ENCODE measurements at regions of chr10 and their contacts with region 1.

Region 1: DNA sequence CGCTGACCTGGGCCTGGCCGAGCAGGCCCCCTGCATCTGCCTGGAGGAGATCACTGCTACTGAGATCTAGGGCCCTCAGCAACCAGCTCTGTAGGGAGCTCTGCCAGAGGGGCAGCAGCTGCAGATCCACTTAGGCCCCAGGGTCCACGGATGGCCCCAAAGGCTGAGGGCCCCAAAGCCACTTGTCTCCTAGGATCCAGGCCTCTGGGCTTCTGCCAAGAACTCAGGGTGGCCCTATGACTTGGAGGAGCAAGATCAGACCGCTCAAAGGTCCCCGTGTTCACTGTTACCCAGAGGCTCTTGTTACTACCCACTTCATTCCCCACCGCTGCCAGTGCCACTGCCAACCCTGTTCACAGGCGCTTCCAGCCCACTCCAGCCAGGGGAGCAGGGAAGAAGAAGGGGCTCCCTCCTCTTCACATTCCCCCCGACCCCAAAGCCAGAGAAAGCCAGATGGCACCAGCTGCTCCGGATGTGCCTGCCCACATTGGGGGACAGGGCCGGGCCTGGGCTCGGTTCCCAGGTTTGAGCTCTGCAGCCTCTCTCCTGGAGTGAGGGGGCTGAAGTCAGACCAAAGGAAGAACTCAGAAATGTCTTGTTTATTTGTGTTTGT is 7.6 kb downstream of the LZTS2 start:
- DNase-seq: no peak
- H3K4me3 ChIP-seq: no peak overlapping the region
- H3K27ac ChIP-seq: peak overlapping the region in 1 of 2 experiments; percentile 61; a peak in 2 of 4 replicates
- H3K4me1 ChIP-seq: peaks cover 6 to 26% of the 10 kb centered on the region in 2 experiments; a peak in 3 of 4 replicates
- H3K27me3 ChIP-seq: no peaks in the 10 kb centered on the region
- CTCF ChIP-seq: no peak
- EP300 ChIP-seq: no peak
- RAD21 ChIP-seq: no peak

Region 2: GRCh38 chr10:100993986-100994708 is 13.1 kb before region 1 on chr10:
- CTCF ChIA-PET with region 1: interaction called, 132 read pairs
- POLR2A ChIA-PET with region 1: interaction called, 5 read pairs
- DNase-seq: peak; percentile 70
- H3K4me3 ChIP-seq: no peak overlapping the region
- H3K27ac ChIP-seq: peak overlapping the region in 1 of 2 experiments; percentile 28; a peak in 1 of 4 replicates
- H3K4me1 ChIP-seq: peaks cover 10 to 31% of the 10 kb centered on the region in 2 experiments
- H3K27me3 ChIP-seq: no peaks in the 10 kb centered on the region
- CTCF ChIP-seq: peak; percentile 77
- EP300 ChIP-seq: no peak
- RAD21 ChIP-seq: peak; percentile 77

Measured in SK-N-SH (cell line).